ENCODE measurements at regions of chr1 and their contacts with region 1.

Region 1: DNA sequence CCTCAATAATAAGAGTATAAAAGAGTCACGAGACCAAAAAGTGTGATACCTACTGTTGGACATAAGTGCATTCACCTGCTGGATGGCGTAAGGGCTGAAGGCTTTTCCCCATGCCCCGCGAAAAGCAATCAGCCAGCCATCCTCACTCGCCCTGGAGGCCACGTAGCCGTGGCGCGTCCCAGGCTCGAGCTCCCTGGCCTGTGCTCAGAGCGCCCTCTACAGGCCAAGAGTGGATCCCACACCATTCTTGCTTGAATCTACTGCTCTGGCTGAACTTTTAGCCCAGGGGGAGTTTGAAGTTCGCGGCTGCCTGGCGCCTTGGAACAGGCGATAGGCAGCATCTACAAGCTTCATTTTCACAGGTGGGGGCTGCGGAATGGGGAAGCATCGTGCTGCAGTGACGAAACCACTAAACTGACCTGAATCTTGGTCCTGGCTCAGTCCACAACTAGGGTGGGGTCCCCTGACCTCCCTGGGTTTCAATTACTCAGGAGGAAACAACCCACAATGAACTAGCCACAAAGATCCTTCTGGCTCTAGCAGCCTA is 70.3 kb upstream of the SERBP1 start:
- DNase-seq: peak; percentile 91
- ATAC-seq: peak; percentile 88

Region 2: DNA sequence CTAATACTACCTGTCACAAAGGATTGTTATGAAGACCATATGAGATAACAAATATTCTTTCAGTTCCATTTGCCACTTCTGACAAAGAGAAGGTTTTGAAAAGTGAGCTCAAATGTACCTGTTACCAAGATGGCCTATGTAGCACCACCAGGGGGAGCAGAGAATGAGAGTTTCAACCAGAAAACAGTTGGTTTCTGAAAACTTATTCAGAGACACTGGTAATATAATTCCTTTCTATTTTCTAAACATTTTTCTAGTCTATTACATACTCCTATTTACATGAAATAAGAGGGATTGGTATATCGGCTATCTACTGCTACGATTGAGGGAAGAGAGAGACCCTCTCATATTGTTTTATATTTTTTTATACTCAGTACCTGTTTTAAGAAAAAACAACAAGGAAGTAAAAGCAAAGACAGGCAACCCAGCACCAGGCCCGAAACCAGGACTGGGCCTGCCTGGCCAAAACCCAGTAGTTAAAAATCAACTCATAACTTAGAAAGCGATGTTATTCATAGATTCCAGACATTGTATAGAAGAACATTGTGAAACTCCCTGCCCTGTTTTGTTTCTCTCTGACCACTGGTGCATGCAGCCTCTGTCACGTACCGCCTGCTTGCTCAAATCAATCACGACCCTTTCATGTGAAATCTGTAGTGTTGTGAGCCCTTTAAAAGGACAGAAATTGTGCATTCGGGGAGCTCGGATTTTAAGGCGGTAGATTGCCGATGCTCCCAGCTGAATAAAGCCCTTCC is 285.9 kb before region 1 on chr1:
- intact Hi-C with region 1: loop called (anchors 5 kb)
- DNase-seq: no peak
- ATAC-seq: no peak

Region 3: DNA sequence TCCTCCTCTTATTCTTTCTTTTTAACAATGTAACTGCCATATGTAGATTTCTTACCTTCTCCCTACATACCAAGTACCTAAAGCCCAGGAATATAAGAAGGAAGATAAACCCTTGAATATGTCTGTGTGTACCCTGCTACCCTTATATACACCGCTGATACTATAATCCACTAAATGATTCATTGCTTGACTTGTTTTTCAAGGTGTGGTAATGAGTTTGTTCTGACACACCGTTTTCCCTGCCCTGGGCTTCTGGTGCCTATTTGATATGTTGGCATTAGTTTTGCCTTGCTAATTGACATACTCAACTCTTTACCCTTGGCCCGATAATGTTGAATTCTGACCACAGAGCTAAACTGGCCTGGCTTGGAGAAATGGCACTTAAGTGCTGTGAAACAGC is 269.9 kb before region 1 on chr1:
- intact Hi-C with region 1: loop called (anchors 5 kb)
- DNase-seq: no peak
- ATAC-seq: no peak

Region 4: DNA sequence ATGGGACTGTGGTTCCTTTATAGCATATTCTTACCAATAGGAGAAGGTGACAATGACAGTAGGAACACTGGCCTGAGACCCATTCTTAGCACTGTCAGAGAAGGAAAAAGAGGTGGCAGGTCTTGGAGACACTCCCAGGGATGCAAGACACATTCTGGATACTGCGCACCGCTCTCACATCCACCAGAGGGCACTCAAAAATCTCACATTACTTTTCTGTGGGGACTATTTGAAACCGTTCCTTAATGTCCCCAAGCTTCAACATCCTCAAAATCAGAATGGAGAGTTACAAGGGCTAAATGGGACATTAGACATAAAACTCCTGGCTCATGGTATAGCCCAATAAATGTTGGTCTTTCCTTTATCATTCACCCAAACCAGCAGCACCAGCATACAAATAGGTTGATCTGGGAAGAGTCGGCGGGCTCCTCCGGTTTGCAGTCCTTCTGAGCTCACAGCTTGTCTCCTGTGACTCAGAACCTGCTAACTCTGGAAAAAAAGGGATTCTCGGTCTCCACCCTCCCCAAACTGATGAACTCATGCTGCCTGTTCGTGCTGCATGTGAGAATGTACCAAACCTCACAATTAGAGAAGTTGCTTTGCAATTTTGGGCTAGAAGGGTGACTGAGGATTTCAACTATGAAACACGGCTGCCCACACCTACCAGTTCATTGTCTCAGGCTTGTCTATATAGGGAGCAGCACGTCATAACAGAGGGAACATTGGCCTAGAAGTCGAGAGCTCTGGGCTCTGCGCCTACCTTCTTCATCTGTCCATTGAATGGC is 152.6 kb before region 1 on chr1:
- intact Hi-C with region 1: loop called (anchors 2 kb)
- DNase-seq: no peak
- ATAC-seq: peak; percentile 65